ENCODE measurements at regions of chr6 and their contacts with region 1.

Region 1: GRCh38 chr6:113306552-113307145 is 550.5 kb upstream of the MARCKS start:
- DNase-seq: peak; percentile 76
- ATAC-seq: peak; percentile 75

Region 2: DNA sequence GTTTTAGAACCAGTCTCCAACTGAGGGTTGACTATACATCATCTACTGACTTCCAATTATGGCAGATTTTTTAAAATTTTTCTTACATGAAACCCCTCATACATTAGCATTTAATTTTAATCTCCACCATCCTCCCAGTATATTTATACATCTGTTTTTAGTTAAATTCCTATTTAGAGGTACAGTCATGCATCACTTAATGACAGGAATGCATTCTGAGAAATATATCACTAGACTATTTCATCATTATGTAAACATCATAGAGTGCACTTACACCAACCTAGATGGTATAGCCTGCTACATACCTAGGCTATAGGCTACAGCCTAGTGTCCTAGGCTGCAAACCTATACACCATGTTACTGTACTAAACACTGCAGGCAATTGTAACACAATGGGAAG is 233.8 kb after region 1 on chr6:
- intact Hi-C with region 1: no loop called
- DNase-seq: no peak
- ATAC-seq: no peak

Region 3: DNA sequence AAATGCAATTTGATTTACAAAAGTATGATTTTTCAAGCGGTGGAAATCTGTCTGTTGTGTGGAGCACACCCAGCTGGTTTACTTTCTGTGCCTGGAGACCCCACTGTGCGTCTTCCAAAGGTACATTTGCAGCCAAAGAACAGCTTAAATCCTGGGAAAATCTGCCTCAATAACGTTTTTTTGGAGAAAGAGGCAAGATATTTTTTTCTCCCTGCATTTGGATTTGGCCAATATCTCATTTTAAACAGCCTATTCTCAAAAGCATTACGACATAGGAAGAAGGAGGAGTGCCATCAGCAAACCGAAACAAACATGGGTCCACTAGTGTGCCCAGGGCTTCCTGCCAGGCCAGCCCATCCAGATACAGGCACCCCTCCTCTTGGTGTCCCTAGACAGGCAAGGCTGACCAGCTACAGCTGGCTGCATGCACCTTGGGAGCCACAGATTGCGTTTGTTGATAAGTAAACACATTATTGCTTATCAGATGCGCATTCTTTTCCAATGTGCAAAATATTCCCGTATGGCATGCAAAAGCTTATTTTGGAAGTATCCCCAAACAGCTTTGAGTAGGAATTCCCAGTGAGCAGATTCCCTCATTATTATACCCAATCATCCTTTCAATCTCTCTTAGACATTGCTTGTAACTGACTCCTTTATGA is 366.0 kb after region 1 on chr6:
- intact Hi-C with region 1: no loop called
- DNase-seq: peak; percentile 82
- ATAC-seq: peak; percentile 86

Region 4: GRCh38 chr6:113859599-113860340 is 553.1 kb after region 1 on chr6:
- intact Hi-C with region 1: loop called (anchors 10 kb)
- DNase-seq: peak; percentile 63
- ATAC-seq: peak; percentile 5

Measured in left ventricle myocardium superior (tissue), 1 donor.